Activated CD4-positive, alpha-beta T cell treated with anti-CD3 and anti-CD28 coated beads for 36 hours (primary cell): ENCODE measurements at regions of chr3 and their contacts with region 1.

Region 1: GRCh38 chr3:185253645-185254410 is at the start of gene EHHADH:
- DNase-seq: peak; percentile 63
- ATAC-seq: peak; percentile 91
- H3K4me3 Mint-ChIP-seq: peak within 1 kb of the TSS; percentile 58
- H3K27ac Mint-ChIP-seq: no peak within 1 kb of the TSS
- H3K4me1 Mint-ChIP-seq: peaks cover 5% of the 10 kb centered on the region
- H3K27me3 Mint-ChIP-seq: peaks cover 21% of the 10 kb centered on the region
- total RNA-seq, gene EHHADH: 2.7 to 3.3 TPM

Region 2: DNA sequence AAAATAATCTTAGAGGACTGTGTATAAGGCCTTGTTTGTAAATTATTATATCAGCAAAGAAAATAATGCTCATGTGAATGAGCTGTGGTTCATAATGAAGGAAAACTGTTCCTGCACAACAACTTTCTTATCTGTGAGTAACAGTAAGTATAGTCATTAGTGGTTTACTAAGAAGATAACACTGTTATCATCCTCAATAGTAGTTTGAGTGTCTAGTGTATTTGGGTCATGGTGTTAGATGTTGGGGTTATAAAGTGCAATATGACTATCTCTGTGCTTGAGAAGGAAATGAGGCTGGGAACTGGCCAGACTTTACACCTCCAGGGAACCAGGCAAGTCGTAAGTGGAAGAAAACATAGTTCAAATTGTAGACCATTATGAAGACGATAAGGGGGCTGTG is 426.3 kb before region 1 on chr3:
- CTCF ChIA-PET with region 1: no interaction called
- POLR2A ChIA-PET with region 1: no interaction called
- intact Hi-C with region 1: no loop called
- DNase-seq: no peak
- ATAC-seq: no peak
- H3K4me3 Mint-ChIP-seq: no peak overlapping the region
- H3K27ac Mint-ChIP-seq: no peak overlapping the region
- H3K4me1 Mint-ChIP-seq: peaks cover 2% of the 10 kb centered on the region
- H3K27me3 Mint-ChIP-seq: no peaks in the 10 kb centered on the region

Region 3: GRCh38 chr3:185282696-185283394 is 29.0 kb after region 1 on chr3:
- CTCF ChIA-PET with region 1: interaction called, 4 read pairs
- POLR2A ChIA-PET with region 1: no interaction called
- intact Hi-C with region 1: loop called in 1 of 2 experiments (anchors 1 kb)
- DNase-seq: peak; percentile 98
- ATAC-seq: peak; percentile 100
- H3K4me3 Mint-ChIP-seq: peak overlapping the region; percentile 97
- H3K27ac Mint-ChIP-seq: peak overlapping the region; percentile 92
- H3K4me1 Mint-ChIP-seq: peaks cover 19% of the 10 kb centered on the region
- H3K27me3 Mint-ChIP-seq: peaks cover 7% of the 10 kb centered on the region